ENCODE measurements at regions of chr17 and their contacts with region 1.

Region 1: DNA sequence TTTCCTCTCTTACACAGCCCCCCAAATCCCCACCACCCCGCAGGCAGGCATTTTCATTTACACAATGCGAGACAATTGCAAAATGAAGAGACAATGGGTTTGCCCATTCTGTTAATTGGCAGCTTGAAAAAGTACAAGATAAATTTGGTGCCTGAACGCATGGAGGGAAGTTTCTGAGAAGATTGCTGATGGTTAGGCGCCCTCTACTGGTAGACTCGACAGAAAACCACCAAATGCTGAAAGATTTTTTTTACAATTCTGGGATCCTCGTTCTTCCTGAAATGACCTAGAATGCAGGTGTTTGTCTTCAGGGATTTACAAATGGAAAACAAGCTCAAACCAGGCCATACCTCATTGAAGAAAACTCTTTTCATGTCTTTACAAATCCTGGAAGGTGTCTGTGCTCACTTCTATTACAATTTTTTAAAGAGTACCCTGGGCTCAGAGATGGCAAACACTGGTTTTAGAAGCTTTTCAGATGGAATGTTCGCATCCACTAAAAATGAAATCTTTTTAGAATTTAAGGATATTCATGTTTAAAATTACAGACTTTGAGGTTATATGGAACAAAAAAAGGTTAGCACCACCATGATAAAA is 338.5 kb downstream of the PMP22 start:
- DNase-seq: peak in 1 of 2 donors; percentile 52
- ATAC-seq: no peak
- H3K4me3 ChIP-seq: no peak overlapping the region
- H3K27ac ChIP-seq: no peak overlapping the region
- H3K4me1 ChIP-seq: no peaks in the 10 kb centered on the region
- H3K27me3 ChIP-seq: peaks cover 0 to 12% (median 0%) of the 10 kb centered on the region in 7 donors
- CTCF ChIP-seq: peak; percentile 57 to 84 (median 81)

Region 2: DNA sequence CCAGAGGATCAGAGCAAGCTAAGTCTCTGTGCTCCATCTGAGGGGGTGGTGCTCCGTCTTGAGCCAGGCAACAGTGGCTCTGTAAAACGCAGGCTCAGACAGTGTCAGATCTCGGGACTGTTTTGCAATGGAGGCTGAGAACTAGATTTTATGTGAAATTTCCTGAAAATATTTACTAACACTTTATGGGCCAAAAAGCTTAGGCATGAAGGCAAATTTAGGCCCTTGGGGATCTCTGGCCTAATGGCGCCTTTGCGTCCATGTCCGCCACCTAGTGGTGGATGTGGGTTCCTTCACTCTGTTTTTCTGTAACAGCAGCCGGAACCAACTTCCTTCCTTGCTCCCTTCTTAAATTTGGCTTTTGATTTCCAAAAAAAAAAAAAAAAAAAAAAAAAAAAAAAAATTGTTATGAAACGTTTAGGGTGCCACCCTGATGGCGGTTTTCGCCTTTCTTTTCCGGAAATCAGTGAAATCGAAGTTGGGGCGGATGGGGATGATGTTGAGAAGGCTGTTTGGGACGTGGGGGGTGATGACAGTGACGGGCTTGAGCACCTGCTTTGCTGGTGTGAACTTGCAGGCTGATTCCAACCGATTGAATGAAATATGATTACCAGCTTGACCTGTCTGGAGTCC is 1894.8 kb before region 1 on chr17:
- intact Hi-C with region 1: loop called in 1 of 10 experiments (anchors 10 kb)
- DNase-seq: peak in 1 of 2 donors; percentile 22
- ATAC-seq: peak; percentile 46 to 79 (median 60)
- H3K4me3 ChIP-seq: no peak overlapping the region
- H3K27ac ChIP-seq: no peak overlapping the region
- H3K4me1 ChIP-seq: peaks cover 0 to 8% (median 0%) of the 10 kb centered on the region in 9 donors
- H3K27me3 ChIP-seq: peaks cover 0 to 1% (median 0%) of the 10 kb centered on the region in 7 donors
- CTCF ChIP-seq: peak; percentile 70 to 83 (median 79)

Region 3: GRCh38 chr17:13594762-13595598 is 1331.6 kb before region 1 on chr17:
- intact Hi-C with region 1: loop called in 9 of 10 experiments (anchors 5 to 10 kb)
- DNase-seq: peak; percentile 33 to 84
- ATAC-seq: peak in 6 of 8 donors; percentile 53 to 80 (median 71)
- H3K4me3 ChIP-seq: no peak overlapping the region
- H3K27ac ChIP-seq: no peak overlapping the region
- H3K4me1 ChIP-seq: peaks cover 0 to 12% (median 0%) of the 10 kb centered on the region in 9 donors
- H3K27me3 ChIP-seq: peaks cover 0 to 30% (median 14%) of the 10 kb centered on the region in 7 donors
- CTCF ChIP-seq: peak; percentile 73 to 91 (median 89)

Region 4: GRCh38 chr17:14622615-14623101 is 304.0 kb before region 1 on chr17:
- intact Hi-C with region 1: no loop called
- DNase-seq: no peak
- ATAC-seq: no peak
- H3K4me3 ChIP-seq: no peak overlapping the region
- H3K27ac ChIP-seq: no peak overlapping the region
- H3K4me1 ChIP-seq: peaks cover 0 to 4% (median 0%) of the 10 kb centered on the region in 9 donors
- H3K27me3 ChIP-seq: peaks cover 0 to 8% (median 0%) of the 10 kb centered on the region in 7 donors
- CTCF ChIP-seq: no peak

Region 5: GRCh38 chr17:14910916-14911315 is 15.7 kb before region 1 on chr17:
- intact Hi-C with region 1: no loop called
- DNase-seq: no peak
- ATAC-seq: no peak
- H3K4me3 ChIP-seq: no peak overlapping the region
- H3K27ac ChIP-seq: no peak overlapping the region
- H3K4me1 ChIP-seq: no peaks in the 10 kb centered on the region
- H3K27me3 ChIP-seq: no peaks in the 10 kb centered on the region
- CTCF ChIP-seq: no peak

Region 6: DNA sequence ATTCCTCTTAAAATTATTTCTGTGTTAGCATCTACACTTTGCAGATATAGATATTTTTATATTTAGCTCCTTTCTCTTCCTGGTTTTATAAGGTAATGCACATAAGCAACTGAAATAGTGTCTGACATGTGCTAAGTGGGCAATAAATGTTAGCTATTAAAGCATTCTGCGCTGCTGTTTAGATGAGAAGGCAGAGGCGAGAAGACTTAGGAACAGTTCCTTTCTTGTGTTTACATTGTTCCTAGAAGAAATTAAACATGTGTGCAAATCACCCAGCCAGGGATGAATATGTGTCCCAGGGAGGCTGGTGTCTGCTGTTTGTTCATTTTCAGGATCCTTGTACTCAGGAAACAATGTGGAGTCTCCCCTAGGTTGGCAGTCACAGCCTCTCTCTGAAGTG is 46.2 kb after region 1 on chr17:
- intact Hi-C with region 1: loop called in 1 of 10 experiments (anchors 2 kb)
- DNase-seq: no peak
- ATAC-seq: no peak
- H3K4me3 ChIP-seq: no peak overlapping the region
- H3K27ac ChIP-seq: no peak overlapping the region
- H3K4me1 ChIP-seq: no peaks in the 10 kb centered on the region
- H3K27me3 ChIP-seq: peaks cover 0 to 10% (median 0%) of the 10 kb centered on the region in 7 donors
- CTCF ChIP-seq: no peak

Region 7: GRCh38 chr17:15157051-15157450 is 230.4 kb after region 1 on chr17:
- intact Hi-C with region 1: loop called in 5 of 10 experiments (anchors 5 to 10 kb)
- DNase-seq: no peak
- ATAC-seq: peak in 1 of 8 donors; percentile 48
- H3K4me3 ChIP-seq: no peak overlapping the region
- H3K27ac ChIP-seq: no peak overlapping the region
- H3K4me1 ChIP-seq: peaks cover 0 to 3% (median 0%) of the 10 kb centered on the region in 9 donors
- H3K27me3 ChIP-seq: no peaks in the 10 kb centered on the region
- CTCF ChIP-seq: no peak

Measured in heart right ventricle (tissue), 16 donors.